ENCODE measurements at regions of chr17 and their contacts with region 1.

Region 1: DNA sequence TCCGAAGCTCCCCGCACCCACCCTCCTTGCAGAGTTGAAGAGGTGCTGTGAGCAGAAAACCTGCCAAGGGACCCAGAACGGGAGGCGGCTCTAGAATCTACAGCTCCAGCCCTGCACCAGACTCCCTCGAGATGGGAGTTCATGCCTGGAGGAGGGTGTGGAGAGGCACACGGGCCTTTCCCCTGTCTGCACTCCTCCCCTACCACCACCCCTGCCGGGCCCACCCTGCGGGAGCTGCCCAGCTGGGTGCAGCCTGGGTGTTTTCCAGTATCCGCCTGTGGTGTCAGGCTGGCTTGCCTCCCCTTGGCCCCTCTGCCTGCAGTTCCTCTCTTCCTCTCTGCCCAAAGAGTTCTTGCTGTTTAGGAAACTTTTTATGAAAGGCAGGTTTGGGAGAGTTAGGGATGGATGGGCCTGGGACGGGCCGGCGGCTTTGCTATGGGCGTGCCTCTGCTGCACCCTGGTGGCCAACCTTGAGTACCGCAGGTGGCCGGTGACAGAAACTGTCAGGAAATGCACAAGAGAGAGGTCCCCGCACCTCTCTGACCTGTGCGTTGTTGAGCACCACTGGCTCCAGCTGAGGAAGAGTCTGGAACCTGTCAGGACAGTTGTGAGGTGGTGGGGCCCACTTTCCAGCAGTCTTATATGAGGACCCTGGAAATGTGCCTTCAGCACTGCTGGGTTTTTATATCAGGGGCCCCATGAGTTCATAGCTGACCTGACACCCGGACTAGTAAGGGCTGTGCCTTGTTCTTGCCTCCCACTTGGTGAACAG is 354.1 kb downstream of the SEC14L1 start:
- DNase-seq: peak; percentile 83
- H3K4me3 ChIP-seq: no peak overlapping the region
- H3K27ac ChIP-seq: peak overlapping the region; percentile 37 to 81 (median 59)
- H3K4me1 ChIP-seq: peaks cover 0 to 16% (median 14%) of the 10 kb centered on the region in 4 donors
- H3K27me3 ChIP-seq: no peaks in the 10 kb centered on the region
- CTCF ChIP-seq: peak; percentile 99
- EP300 ChIP-seq: no peak
- POLR2A ChIP-seq: no peak

Region 2: GRCh38 chr17:77331301-77331864 is 163.5 kb before region 1 on chr17:
- in situ Hi-C with region 1: loop called (anchors 5 to 25 kb)
- intact Hi-C with region 1: loop called (anchors 2 kb)
- DNase-seq: peak; percentile 95
- H3K4me3 ChIP-seq: peak overlapping the region in 1 of 4 donors; percentile 35
- H3K27ac ChIP-seq: peak overlapping the region; percentile 59 to 81 (median 73)
- H3K4me1 ChIP-seq: peaks cover 0 to 46% (median 36%) of the 10 kb centered on the region in 4 donors
- H3K27me3 ChIP-seq: no peaks in the 10 kb centered on the region
- CTCF ChIP-seq: peak; percentile 92 to 98 (median 96)
- EP300 ChIP-seq: no peak
- POLR2A ChIP-seq: no peak

Region 3: GRCh38 chr17:77429919-77430752 is 64.7 kb before region 1 on chr17:
- in situ Hi-C with region 1: loop called in 3 of 4 experiments (anchors 10 kb)
- intact Hi-C with region 1: loop called (anchors 1 kb)
- DNase-seq: peak; percentile 91
- H3K4me3 ChIP-seq: no peak overlapping the region
- H3K27ac ChIP-seq: peak overlapping the region; percentile 89 to 95 (median 94)
- H3K4me1 ChIP-seq: peaks cover 62 to 82% (median 69%) of the 10 kb centered on the region in 4 donors
- H3K27me3 ChIP-seq: no peaks in the 10 kb centered on the region
- CTCF ChIP-seq: peak; percentile 73 to 91 (median 77)
- EP300 ChIP-seq: peak; percentile 65
- POLR2A ChIP-seq: no peak

Region 4: DNA sequence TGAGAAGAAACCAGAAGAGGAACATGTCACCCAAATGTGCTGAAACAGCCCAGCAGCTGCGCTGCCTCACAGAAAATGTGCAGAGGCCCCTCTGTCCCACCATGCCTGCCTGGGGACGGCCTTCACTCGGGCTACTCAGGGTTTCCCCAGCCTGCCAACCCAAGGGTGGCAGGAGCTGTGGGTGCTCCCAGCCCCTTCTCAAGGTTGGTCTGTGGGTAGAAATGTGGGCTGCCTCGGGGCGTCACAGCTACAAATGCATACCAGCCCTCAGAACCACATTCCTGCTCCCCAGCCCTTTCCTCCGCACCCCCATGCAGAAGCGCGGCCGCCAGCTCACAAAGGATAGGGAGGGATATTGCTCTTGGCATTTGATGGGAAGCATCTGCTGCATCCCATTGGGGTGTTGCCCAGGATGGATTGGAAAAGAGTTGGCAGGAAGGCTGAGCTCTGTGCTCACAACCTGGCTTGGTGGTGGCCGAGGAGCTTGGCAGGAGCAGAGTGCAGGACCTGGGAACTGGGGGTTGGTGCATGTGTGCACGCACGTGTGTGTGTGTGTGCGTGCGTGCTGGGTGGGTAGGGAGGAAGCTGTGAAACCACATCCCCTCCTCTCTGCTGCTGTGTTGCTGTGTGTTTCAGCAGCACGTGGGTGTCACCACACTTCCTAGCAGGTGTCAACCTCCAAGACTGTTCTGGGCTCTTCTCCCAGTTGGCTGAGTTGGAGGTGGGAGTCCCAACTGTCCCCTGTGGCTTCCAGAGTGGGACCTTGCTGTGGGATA is 49.7 kb before region 1 on chr17:
- in situ Hi-C with region 1: loop called in 1 of 4 experiments (anchors 5 kb)
- intact Hi-C with region 1: no loop called
- DNase-seq: peak; percentile 79
- H3K4me3 ChIP-seq: peak overlapping the region in 1 of 4 donors; percentile 25
- H3K27ac ChIP-seq: peak overlapping the region; percentile 83 to 89 (median 86)
- H3K4me1 ChIP-seq: peaks cover 54 to 90% (median 57%) of the 10 kb centered on the region in 4 donors
- H3K27me3 ChIP-seq: no peaks in the 10 kb centered on the region
- CTCF ChIP-seq: no peak
- EP300 ChIP-seq: no peak
- POLR2A ChIP-seq: peak; percentile 29

Region 5: DNA sequence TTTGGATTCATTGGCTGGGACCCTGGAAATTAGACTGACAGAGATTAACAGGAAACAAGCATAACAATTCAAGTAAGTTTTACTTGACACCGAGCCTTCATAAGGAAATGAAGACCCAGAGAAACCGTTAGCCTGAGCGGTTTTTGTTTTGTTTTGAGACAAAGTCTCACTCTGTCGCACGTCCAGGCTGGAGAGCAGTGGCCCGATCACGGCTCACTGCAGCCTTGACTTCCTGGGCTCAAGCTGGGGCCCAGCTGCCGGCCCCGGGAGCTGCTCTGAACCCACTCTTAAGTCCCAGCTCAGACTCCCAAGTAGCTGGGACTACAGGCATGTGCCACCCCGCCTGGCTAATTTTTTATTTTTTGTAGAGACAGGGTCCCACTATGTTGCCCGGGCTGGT is 32.7 kb before region 1 on chr17:
- in situ Hi-C with region 1: no loop called
- intact Hi-C with region 1: no loop called
- DNase-seq: peak; percentile 52
- H3K4me3 ChIP-seq: peak overlapping the region in 1 of 4 donors; percentile 4
- H3K27ac ChIP-seq: peak overlapping the region; percentile 72 to 96 (median 92)
- H3K4me1 ChIP-seq: peaks cover 35 to 93% (median 54%) of the 10 kb centered on the region in 4 donors
- H3K27me3 ChIP-seq: no peaks in the 10 kb centered on the region
- CTCF ChIP-seq: no peak
- EP300 ChIP-seq: no peak
- POLR2A ChIP-seq: no peak